ENCODE measurements at regions of chr11 and their contacts with region 1.

Region 1: GRCh38 chr11:19742588-19743292 is 30.1 kb downstream of the NAV2 start:
- H3K4me3 Mint-ChIP-seq: no peak overlapping the region
- H3K27ac Mint-ChIP-seq: no peak overlapping the region
- H3K4me1 Mint-ChIP-seq: no peaks in the 10 kb centered on the region
- H3K27me3 Mint-ChIP-seq: peaks cover 5% of the 10 kb centered on the region

Region 2: DNA sequence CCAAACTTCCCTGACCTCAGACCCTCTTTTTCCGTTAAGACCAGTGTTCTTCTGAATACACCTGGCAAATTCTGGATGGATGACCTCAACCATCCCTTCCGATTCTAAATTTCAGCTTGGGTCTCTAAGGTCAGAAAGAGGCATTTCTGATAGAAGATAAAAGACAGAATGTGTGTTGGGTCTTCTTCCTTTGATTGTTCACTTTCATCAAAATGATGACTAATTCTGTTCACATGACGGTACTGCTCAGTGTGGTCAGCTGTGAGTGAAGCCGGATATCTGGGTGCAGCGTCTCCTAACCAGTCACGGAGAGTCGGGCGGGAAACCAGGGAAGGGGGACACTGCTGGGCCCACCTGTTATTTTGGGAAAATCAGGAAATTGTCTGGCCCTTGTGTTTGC is 181.7 kb before region 1 on chr11:
- intact Hi-C with region 1: loop called (anchors 1 kb)
- H3K4me3 Mint-ChIP-seq: no peak overlapping the region
- H3K27ac Mint-ChIP-seq: no peak overlapping the region
- H3K4me1 Mint-ChIP-seq: no peaks in the 10 kb centered on the region
- H3K27me3 Mint-ChIP-seq: peaks cover 16% of the 10 kb centered on the region

Measured in dendritic cell treated with granulocyte-macrophage colony-stimulating factor and Interleukin-4, amounts not matched to agents 40 ng/mL and 50 ng/mL, for 4 days (primary cell).